Cardiac septum (tissue), 1 donor: ENCODE measurements at regions of chr1 and their contacts with region 1.

Region 1: GRCh38 chr1:227734856-227735538 is at the starts of genes JMJD4 and SNAP47:
- DNase-seq: peak; percentile 94
- total RNA-seq, gene JMJD4: 10.7 TPM
- total RNA-seq, gene SNAP47: 44.0 TPM

Region 2: GRCh38 chr1:227482023-227482299 is 253.0 kb before region 1 on chr1:
- intact Hi-C with region 1: loop called (anchors 5 kb)
- DNase-seq: no peak

Region 3: GRCh38 chr1:227563324-227564201 is 171.4 kb before region 1 on chr1 and contains the start of gene ZNF678:
- intact Hi-C with region 1: loop called (anchors 5 kb)
- DNase-seq: peak; percentile 93
- total RNA-seq, gene ZNF678: 4.5 TPM

Region 4: DNA sequence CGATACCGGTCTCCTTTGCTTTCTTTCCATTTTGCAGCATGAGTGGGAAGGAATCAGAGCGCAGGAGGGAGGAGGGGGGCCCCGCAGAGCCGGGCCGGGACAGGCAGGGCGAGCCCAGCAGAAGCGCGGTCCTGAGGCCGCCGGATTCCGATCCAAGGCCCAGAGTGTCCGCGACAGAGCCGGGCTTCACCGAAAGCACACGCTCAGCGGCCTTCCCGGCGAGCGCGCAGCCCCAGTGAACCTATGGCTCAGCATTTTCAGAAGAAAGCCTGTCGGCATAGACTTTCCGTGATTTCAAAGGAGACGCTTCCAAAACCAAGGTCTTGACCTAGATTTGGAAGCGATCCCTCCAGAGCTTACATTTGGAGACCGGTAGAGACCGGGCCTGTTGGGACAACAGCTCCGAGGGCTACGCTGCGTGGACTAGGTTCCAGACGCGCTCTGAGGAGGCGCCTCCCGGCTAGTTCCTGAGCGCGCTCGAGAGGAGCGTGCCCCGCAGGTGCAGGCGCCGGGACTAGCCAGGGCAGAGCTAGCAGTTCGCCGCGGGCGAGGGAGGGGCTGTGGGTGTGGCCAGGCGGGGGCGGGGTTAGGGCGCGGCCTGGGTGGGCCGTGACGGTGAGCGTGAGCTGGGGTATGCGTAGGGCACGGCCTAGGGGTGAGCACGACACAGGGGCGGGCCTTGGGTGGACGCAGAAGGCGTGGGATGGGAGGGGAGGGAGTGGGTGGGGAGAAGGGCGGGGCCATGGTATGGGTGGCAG is 52.7 kb after region 1 on chr1:
- intact Hi-C with region 1: loop called (anchors 5 kb)
- DNase-seq: peak; percentile 94

Region 5: DNA sequence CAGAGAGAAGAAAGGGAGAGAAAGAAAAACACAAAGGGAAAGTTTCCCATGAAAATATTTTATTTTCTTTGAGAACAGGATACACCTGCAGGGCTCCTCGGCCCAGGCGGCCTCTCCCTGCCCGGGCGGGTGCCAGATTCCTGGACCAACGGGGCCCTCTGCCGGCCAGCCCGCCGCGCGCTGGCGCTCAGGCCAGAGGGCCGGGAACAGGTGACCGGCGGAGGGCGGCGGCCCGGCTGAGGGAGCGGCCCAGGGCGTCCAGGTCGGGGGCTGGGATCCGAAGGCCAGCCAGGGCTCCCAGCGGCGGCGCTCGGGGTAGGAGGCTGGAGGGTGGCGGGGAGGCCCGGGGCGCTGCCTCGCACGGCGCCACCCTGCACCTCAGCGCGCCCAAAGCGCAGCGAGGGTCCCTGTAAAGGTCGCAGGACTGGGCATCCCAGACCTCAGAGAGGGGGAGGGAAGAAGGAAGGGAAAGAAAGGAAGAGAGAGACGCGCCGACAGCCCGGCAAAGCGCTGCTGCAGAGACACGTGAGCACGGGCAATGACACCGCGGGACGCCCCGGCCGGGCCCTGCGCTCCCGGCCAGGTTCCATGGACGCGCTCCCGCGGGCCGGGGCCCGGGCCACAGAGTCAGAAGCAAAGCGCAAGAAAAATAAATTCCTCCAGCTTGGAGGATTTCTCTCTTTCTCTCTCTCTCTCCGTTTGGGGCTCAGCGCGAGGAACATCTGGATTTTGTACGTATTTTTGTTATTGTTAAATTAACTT is 211.8 kb after region 1 on chr1:
- intact Hi-C with region 1: loop called (anchors 2 kb)
- DNase-seq: peak; percentile 88

Region 6: DNA sequence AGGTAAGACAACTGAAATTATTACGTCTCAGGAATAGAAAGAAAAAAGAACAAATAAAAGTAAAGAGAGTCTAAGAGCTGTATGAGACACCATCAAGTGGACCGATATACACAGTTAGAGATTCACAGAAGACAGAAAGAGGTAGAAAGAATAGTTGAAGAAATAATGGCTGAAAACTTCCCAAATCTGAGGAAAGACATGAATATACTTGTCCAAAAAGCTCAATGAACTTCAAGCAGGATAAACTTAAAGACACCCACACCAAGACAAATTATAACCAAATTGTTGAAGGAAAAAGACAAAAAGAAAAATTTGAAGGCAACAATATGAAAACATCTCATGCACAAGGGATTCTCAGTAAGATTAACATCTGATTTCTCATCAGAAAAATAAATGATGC is 252.2 kb after region 1 on chr1:
- intact Hi-C with region 1: no loop called
- DNase-seq: no peak

Region 7: GRCh38 chr1:228082135-228082891 is 347.3 kb after region 1 on chr1 and contains the start of gene ARF1:
- intact Hi-C with region 1: loop called (anchors 5 kb)
- DNase-seq: peak; percentile 97
- total RNA-seq, gene ARF1: 332 TPM